CD8-positive, alpha-beta T cell (primary cell): ENCODE measurements at regions of chr22 and their contacts with region 1.

Region 1: DNA sequence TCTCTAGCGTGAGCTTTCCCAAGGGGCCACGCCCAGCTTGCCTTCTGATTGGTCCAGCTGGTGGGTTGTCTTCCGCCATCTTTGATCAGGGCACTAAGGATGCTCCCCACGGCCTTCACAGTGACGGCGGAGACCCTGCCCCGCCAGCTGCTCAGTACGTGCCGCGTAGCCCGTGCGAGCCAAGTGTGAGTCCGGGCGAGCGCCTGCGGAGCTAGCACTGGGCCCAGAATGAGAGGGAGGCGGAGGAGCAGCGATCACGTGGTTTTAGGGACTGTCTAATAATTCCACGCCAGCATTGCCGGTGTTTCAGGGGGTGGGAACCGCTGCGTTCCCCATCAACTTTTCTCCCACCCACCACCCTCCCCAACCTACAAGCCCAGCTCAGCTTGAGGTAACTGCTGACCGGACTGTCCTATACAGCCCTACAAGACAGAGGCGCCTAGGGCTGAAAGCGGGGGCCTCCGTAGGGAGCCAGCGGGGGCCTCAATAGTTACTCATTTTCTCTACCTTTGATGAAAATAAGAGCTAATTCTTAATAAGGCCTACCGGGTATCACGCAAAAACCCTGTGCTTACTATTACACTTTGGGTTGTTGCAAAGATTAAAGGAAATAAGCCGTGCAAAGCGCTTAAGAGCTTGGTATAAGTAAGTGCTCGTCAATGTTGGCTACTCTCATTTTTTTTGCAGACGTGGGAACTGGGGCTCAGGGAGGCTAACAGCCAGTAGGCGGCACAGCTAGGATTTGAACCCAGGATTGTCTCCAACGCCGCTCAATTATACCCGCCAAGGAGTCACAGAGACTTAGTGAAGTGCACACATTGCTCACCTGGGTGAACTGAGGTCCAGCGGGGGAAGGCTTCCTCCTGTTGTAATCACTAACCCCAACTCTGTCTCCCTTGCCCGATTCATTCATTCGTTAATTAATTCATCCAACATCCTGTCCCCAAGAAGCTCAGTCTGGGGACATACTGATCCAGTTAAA is 1.3 kb upstream of the MTFP1 start:
- DNase-seq: peak; percentile 94 to 100 (median 98)
- ATAC-seq: peak; percentile 76
- H3K4me3 ChIP-seq: peak overlapping the region; percentile 64 to 69
- H3K4me3 Mint-ChIP-seq: peak overlapping the region; percentile 93
- H3K27ac ChIP-seq: peak overlapping the region; percentile 89 to 91
- H3K27ac Mint-ChIP-seq: peak overlapping the region; percentile 97
- H3K4me1 ChIP-seq: peaks cover 41% of the 10 kb centered on the region
- H3K4me1 Mint-ChIP-seq: peaks cover 63% of the 10 kb centered on the region
- H3K27me3 ChIP-seq: no peaks in the 10 kb centered on the region
- H3K27me3 Mint-ChIP-seq: no peaks in the 10 kb centered on the region
- CTCF ChIP-seq: no peak

Region 2: GRCh38 chr22:30262917-30263741 is 161.1 kb before region 1 on chr22:
- CTCF ChIA-PET with region 1: interaction called, 15 read pairs
- POLR2A ChIA-PET with region 1: no interaction called
- intact Hi-C with region 1: loop called (anchors 2 kb)
- DNase-seq: peak; percentile 57 to 88 (median 82)
- ATAC-seq: no peak
- H3K4me3 ChIP-seq: peak overlapping the region; percentile 7 to 13
- H3K4me3 Mint-ChIP-seq: peak overlapping the region; percentile 43
- H3K27ac ChIP-seq: no peak overlapping the region
- H3K27ac Mint-ChIP-seq: no peak overlapping the region
- H3K4me1 ChIP-seq: peaks cover 32% of the 10 kb centered on the region
- H3K4me1 Mint-ChIP-seq: peaks cover 37% of the 10 kb centered on the region
- H3K27me3 ChIP-seq: no peaks in the 10 kb centered on the region
- H3K27me3 Mint-ChIP-seq: no peaks in the 10 kb centered on the region
- CTCF ChIP-seq: peak; percentile 100

Region 3: DNA sequence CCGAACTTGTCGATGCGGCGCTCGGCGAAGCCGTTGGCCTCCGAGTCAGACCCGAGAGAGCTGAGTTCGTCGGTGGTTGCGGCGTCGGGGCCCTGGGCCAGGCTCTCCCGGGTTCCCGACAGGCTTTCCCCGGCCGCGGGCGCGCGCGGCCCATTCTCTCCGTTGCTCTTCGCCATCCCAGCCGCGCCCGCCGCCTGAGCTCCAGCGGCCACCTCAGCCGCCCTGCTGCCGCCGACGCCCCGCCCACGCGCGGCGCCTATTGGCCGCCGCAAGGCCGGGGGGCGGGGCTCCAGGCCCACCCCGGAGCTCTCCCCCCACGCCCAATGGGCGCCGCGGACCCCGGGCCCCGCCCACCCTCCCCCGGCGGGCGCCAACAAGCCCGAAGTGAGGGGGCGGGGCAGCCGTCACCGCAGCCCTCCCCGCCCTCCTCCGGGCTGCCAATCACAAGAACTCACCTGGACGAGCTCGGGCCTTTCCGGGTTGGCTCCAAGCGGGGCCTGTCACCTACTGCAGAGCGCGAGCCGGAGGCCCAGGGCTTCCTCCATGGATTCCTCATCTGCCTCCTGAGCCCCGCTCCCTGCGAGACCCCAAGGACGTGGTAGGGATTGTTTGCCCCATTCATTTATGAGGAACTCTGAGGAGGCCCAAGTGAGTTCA is 97.4 kb before region 1 on chr22 and contains the start of gene TBC1D10A:
- CTCF ChIA-PET with region 1: no interaction called
- POLR2A ChIA-PET with region 1: interaction called, 4 read pairs
- intact Hi-C with region 1: loop called in 1 of 2 experiments (anchors 5 kb)
- DNase-seq: peak; percentile 86 to 97 (median 94)
- ATAC-seq: peak; percentile 92
- H3K4me3 ChIP-seq: peak within 1 kb of the TSS; percentile 52 to 72
- H3K4me3 Mint-ChIP-seq: peak within 1 kb of the TSS; percentile 93
- H3K27ac ChIP-seq: peak within 1 kb of the TSS; percentile 68 to 86
- H3K27ac Mint-ChIP-seq: peak within 1 kb of the TSS; percentile 91
- H3K4me1 ChIP-seq: peaks cover 47% of the 10 kb centered on the region
- H3K4me1 Mint-ChIP-seq: peaks cover 45% of the 10 kb centered on the region
- H3K27me3 ChIP-seq: no peaks in the 10 kb centered on the region
- H3K27me3 Mint-ChIP-seq: no peaks in the 10 kb centered on the region
- CTCF ChIP-seq: no peak
- total RNA-seq, gene TBC1D10A: 77.5 to 87.3 TPM

Region 4: GRCh38 chr22:30396871-30397655 is 27.2 kb before region 1 on chr22 and contains the start of gene SEC14L2:
- CTCF ChIA-PET with region 1: interaction called, 210 read pairs
- POLR2A ChIA-PET with region 1: interaction called, 64 read pairs
- intact Hi-C with region 1: loop called in 1 of 2 experiments (anchors 1 kb)
- DNase-seq: peak; percentile 20 to 76 (median 65)
- ATAC-seq: peak; percentile 81
- H3K4me3 ChIP-seq: peak within 1 kb of the TSS; percentile 52 to 76
- H3K4me3 Mint-ChIP-seq: peak within 1 kb of the TSS; percentile 89
- H3K27ac ChIP-seq: peak within 1 kb of the TSS in 1 of 2 experiments; percentile 35
- H3K27ac Mint-ChIP-seq: peak within 1 kb of the TSS; percentile 84
- H3K4me1 ChIP-seq: peaks cover 47% of the 10 kb centered on the region
- H3K4me1 Mint-ChIP-seq: peaks cover 59% of the 10 kb centered on the region
- H3K27me3 ChIP-seq: peaks cover 0 to 11% of the 10 kb centered on the region in 2 experiments
- H3K27me3 Mint-ChIP-seq: no peaks in the 10 kb centered on the region
- CTCF ChIP-seq: no peak
- total RNA-seq, gene SEC14L2: 239 to 241 TPM

Region 5: DNA sequence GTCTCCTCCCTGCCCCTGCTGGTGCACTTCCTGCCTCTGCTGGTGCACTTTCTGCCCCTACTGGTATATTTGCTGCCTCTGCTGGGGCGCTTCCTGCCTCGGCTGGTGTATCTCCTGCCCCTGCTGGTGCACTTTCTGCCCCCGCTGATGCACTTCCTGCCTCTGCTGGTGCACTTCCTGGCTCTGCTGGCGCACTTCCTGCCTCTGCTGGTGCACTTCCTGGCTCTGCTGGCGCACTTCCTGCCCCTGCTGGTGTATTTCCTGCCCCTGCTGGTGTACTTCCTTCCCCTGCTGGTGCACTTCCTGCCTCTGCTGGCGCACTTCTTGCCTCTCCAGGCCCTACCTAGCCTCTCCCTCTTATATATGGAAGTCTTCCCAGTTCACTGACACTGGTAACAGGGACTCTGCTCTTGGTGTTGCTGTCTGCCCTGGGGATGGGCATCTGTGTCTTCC is 11.4 kb after region 1 on chr22:
- CTCF ChIA-PET with region 1: interaction called, 50 read pairs
- POLR2A ChIA-PET with region 1: interaction called, 58 read pairs
- intact Hi-C with region 1: loop called (anchors 1 kb)
- DNase-seq: peak; percentile 68 to 99 (median 89)
- ATAC-seq: peak; percentile 92
- H3K4me3 ChIP-seq: peak overlapping the region; percentile 39 to 51
- H3K4me3 Mint-ChIP-seq: peak overlapping the region; percentile 65
- H3K27ac ChIP-seq: peak overlapping the region; percentile 80 to 100
- H3K27ac Mint-ChIP-seq: peak overlapping the region; percentile 97
- H3K4me1 ChIP-seq: peaks cover 17% of the 10 kb centered on the region
- H3K4me1 Mint-ChIP-seq: peaks cover 26% of the 10 kb centered on the region
- H3K27me3 ChIP-seq: peaks cover 0 to 6% of the 10 kb centered on the region in 2 experiments
- H3K27me3 Mint-ChIP-seq: peaks cover 22% of the 10 kb centered on the region
- CTCF ChIP-seq: peak; percentile 70

Region 6: GRCh38 chr22:31345331-31346254 is 921.3 kb after region 1 on chr22:
- CTCF ChIA-PET with region 1: no interaction called
- POLR2A ChIA-PET with region 1: no interaction called
- intact Hi-C with region 1: loop called in 1 of 2 experiments (anchors 5 kb)
- DNase-seq: peak; percentile 78 to 97 (median 90)
- ATAC-seq: peak; percentile 77
- H3K4me3 ChIP-seq: peak overlapping the region; percentile 63 to 72
- H3K4me3 Mint-ChIP-seq: peak overlapping the region; percentile 90
- H3K27ac ChIP-seq: peak overlapping the region; percentile 51 to 70
- H3K27ac Mint-ChIP-seq: peak overlapping the region; percentile 93
- H3K4me1 ChIP-seq: peaks cover 52% of the 10 kb centered on the region
- H3K4me1 Mint-ChIP-seq: peaks cover 52% of the 10 kb centered on the region
- H3K27me3 ChIP-seq: no peaks in the 10 kb centered on the region
- H3K27me3 Mint-ChIP-seq: no peaks in the 10 kb centered on the region
- CTCF ChIP-seq: peak; percentile 82